A673 (cell line): ENCODE measurements at regions of chr3 and their contacts with region 1.

Region 1: GRCh38 chr3:196942226-196942914 is at the start of gene NCBP2:
- DNase-seq: peak; percentile 99
- H3K4me3 ChIP-seq: peak within 1 kb of the TSS; percentile 95
- H3K27ac ChIP-seq: peak within 1 kb of the TSS; percentile 97
- H3K4me1 ChIP-seq: peaks cover 12% of the 10 kb centered on the region
- H3K27me3 ChIP-seq: no peaks in the 10 kb centered on the region
- CTCF ChIP-seq: peak; percentile 81
- total RNA-seq, gene NCBP2: 87.6 and 93.7 TPM in 2 replicates

Region 2: GRCh38 chr3:196711838-196712513 is 230.4 kb before region 1 on chr3 and contains the starts of genes CEP19 and PIGX:
- CTCF ChIA-PET with region 1: interaction called, 3 read pairs
- POLR2A ChIA-PET with region 1: no interaction called
- intact Hi-C with region 1: loop called (anchors 10 kb)
- DNase-seq: peak; percentile 92
- H3K4me3 ChIP-seq: peak within 1 kb of the TSS; percentile 71
- H3K27ac ChIP-seq: peak within 1 kb of the TSS; percentile 80
- H3K4me1 ChIP-seq: peaks cover 25% of the 10 kb centered on the region
- H3K27me3 ChIP-seq: no peaks in the 10 kb centered on the region
- CTCF ChIP-seq: no peak
- total RNA-seq, gene CEP19: 6.0 TPM in 2 replicates
- total RNA-seq, gene PIGX: 59.0 and 59.1 TPM in 2 replicates